ENCODE measurements at regions of chr5 and their contacts with region 1.

Region 1: DNA sequence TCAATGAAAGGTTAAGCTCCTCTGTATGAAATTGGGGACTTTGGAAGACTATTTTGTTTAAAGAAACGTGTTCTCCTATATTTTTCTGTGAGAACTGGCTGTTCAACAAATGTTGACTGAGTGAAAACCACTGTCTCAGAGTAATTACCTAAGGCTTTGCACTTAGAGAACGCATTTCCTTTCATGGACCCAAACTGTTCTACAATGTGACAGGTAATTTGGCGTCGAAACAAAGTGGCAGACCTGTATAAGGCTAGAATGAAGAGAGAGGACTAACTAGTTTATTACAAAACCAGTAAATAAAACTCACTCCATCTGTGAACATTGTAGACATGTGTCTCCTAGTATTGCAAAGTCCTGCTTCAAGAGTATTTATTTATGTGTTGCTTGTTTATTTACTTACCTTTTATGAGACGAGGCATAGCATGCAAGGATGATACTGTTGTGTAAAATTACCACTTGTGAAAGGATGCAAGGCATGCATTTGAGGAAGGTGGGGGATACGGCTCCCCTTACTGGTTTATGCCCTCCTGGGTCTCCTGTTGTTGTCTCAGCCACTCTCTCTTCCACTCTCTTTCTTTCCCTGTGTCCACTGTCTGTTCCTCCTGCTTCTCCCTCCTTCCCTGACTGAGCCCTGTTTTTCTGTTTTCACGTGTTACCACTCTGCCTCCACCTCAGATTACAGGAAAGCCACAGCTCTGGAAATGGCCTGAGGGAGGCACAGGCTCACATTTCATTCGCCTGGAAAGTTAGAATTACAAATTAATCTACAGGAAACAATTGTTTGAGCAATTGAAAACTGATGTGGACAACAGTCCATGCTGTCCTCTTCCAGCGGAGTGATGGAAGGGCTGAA is 444.0 kb upstream of the ZNF608 start:
- DNase-seq: no peak
- ATAC-seq: peak; percentile 94
- H3K4me3 ChIP-seq: peak overlapping the region in 1 of 2 experiments; percentile 15; a peak in 1 of 4 replicates
- H3K27ac ChIP-seq: peak overlapping the region; percentile 73
- H3K4me1 ChIP-seq: peaks cover 17% of the 10 kb centered on the region
- H3K27me3 ChIP-seq: no peaks in the 10 kb centered on the region
- CTCF ChIP-seq: no peak

Region 2: GRCh38 chr5:124919076-124919475 is 271.4 kb before region 1 on chr5:
- CTCF ChIA-PET with region 1: no interaction called
- POLR2A ChIA-PET with region 1: interaction called, 10 read pairs
- in situ Hi-C with region 1: no loop called
- intact Hi-C with region 1: no loop called
- DNase-seq: no peak
- ATAC-seq: no peak
- H3K4me3 ChIP-seq: no peak overlapping the region
- H3K27ac ChIP-seq: peak overlapping the region; percentile 21; the same call in 1 of the 2 replicates
- H3K4me1 ChIP-seq: peaks cover 7% of the 10 kb centered on the region; the same call in 1 of the 2 replicates
- H3K27me3 ChIP-seq: no peaks in the 10 kb centered on the region
- CTCF ChIP-seq: no peak

Region 3: GRCh38 chr5:125043781-125044391 is 146.6 kb before region 1 on chr5:
- CTCF ChIA-PET with region 1: no interaction called
- POLR2A ChIA-PET with region 1: no interaction called
- in situ Hi-C with region 1: no loop called
- intact Hi-C with region 1: no loop called
- DNase-seq: no peak
- ATAC-seq: peak; percentile 85
- H3K4me3 ChIP-seq: no peak overlapping the region
- H3K27ac ChIP-seq: peak overlapping the region; percentile 82
- H3K4me1 ChIP-seq: peaks cover 28% of the 10 kb centered on the region
- H3K27me3 ChIP-seq: no peaks in the 10 kb centered on the region
- CTCF ChIP-seq: no peak

Region 4: GRCh38 chr5:126576974-126577373 is 1386.5 kb after region 1 on chr5:
- CTCF ChIA-PET with region 1: no interaction called
- POLR2A ChIA-PET with region 1: interaction called, 16 read pairs
- in situ Hi-C with region 1: no loop called
- intact Hi-C with region 1: no loop called
- DNase-seq: no peak
- ATAC-seq: no peak
- H3K4me3 ChIP-seq: no peak overlapping the region
- H3K27ac ChIP-seq: no peak overlapping the region
- H3K4me1 ChIP-seq: no peaks in the 10 kb centered on the region
- H3K27me3 ChIP-seq: no peaks in the 10 kb centered on the region
- CTCF ChIP-seq: no peak